HCT116 (cell line): ENCODE measurements at regions of chr10 and their contacts with region 1.

Region 1: DNA sequence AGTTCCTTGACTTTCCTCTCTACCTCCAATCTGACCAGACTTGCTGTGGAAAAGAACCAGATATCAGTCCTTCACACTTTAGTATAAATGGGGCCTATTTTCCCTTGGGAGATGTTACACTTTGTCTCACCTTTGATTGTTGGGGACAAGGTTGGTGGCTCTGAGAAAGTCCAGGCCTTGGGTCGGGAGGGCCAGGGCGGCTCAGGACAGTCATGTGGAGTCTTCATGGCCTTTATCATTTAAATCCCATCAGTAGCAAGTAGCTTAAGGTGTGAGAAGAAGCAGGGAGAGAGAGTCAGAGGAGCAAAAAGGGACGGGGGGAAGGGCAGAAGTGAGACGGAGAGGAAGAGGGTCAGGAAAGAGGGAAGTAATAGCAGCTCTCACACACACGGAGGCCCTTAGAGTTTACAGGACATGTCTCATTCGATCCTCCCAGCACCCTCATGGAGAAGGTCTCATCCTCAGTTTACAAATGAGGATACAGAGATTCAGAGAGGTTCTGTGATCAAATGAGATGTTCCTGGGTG is 40.5 kb downstream of the TBATA start:
- DNase-seq: no peak
- ATAC-seq: no peak
- H3K4me3 ChIP-seq: no peak overlapping the region
- H3K27ac ChIP-seq: no peak overlapping the region
- H3K4me1 ChIP-seq: no peaks in the 10 kb centered on the region
- H3K27me3 ChIP-seq: no peaks in the 10 kb centered on the region
- CTCF ChIP-seq: no peak
- POLR2A ChIP-seq: no peak
- RAD21 ChIP-seq: no peak

Region 2: DNA sequence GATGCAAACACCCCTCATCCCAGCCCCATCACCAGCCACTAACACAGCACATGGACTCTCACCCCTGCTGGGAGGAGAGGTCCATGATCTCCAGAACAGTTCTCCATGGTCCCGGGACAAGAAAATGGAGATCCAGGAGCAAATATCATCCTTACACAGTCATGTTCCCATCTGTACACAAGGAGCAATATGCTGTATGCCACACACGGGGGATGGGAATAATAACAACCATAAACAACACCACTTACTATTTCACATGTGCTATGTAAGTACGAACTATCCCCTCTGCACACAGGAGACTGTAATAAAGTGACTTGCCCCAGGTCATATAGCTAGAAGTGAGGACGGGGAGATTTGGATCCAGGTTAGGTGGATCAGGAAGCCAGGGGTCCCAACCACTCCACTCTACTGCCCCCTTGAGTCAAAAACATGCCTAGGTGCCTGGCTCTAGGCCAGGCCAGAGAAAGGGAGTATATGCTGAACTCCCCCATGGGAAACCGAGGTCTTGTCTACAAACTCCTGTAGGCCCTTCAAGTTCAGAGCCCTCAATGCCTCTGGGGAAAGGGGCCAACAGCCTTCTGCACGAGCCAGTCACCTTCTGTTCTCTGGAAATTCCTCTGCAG is 396.3 kb before region 1 on chr10:
- CTCF ChIA-PET with region 1: no interaction called
- POLR2A ChIA-PET with region 1: no interaction called
- RAD21 ChIA-PET with region 1: interaction called in 1 of 2 experiments, 12 read pairs
- intact Hi-C with region 1: no loop called
- DNase-seq: no peak
- ATAC-seq: peak; percentile 86
- H3K4me3 ChIP-seq: no peak overlapping the region
- H3K27ac ChIP-seq: no peak overlapping the region
- H3K4me1 ChIP-seq: no peaks in the 10 kb centered on the region
- H3K27me3 ChIP-seq: no peaks in the 10 kb centered on the region
- CTCF ChIP-seq: peak; percentile 65 to 80 (median 78)
- POLR2A ChIP-seq: no peak
- RAD21 ChIP-seq: peak; percentile 79